Vagina (tissue), 2 donors: ENCODE measurements at regions of chr2 and their contacts with region 1.

Region 1: GRCh38 chr2:215454519-215455246 is 18.8 kb upstream of the FN1 start:
- DNase-seq: no peak
- H3K4me3 ChIP-seq: no peak overlapping the region
- H3K27ac ChIP-seq: no peak overlapping the region
- H3K4me1 ChIP-seq: no peaks in the 10 kb centered on the region
- H3K27me3 ChIP-seq: no peaks in the 10 kb centered on the region
- CTCF ChIP-seq: peak; percentile 44 to 77 (median 70)
- POLR2A ChIP-seq: no peak

Region 2: GRCh38 chr2:215693193-215693998 is 238.7 kb after region 1 on chr2:
- intact Hi-C with region 1: no loop called
- DNase-seq: no peak
- H3K4me3 ChIP-seq: no peak overlapping the region
- H3K27ac ChIP-seq: no peak overlapping the region
- H3K4me1 ChIP-seq: no peaks in the 10 kb centered on the region
- H3K27me3 ChIP-seq: no peaks in the 10 kb centered on the region
- CTCF ChIP-seq: no peak
- POLR2A ChIP-seq: no peak

Region 3: DNA sequence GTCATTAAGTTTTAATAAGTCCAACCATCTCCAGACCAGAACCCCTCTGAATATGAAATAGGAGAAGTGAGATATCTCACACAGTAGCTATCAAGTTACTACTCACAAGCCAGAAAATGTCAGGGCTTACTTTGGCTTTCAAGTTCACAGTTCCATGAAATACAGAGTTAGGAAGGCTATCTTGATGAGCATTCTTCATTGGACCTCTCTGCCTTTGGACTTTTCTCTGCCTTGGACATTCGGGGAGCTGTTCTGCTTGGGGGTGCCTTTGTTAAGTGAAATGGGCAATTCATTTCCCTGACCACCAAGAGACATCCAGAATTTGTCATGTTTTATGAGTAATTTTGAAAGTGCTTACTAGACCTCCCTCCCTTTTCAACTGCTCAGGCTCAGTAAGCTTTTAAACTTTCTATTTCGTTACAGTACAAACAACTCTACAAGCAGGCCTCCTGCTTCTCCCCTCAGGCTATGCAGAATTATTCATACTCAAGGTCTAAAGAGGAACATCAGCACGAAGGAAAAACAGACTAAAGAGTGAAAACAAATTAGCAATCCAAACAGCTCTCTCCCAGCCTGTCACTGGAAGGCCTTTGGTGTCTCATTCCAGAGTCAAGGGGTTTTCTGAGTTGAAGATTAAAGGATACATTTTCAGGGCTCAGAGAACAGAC is 463.4 kb after region 1 on chr2:
- intact Hi-C with region 1: loop called (anchors 10 kb)
- DNase-seq: no peak
- H3K4me3 ChIP-seq: no peak overlapping the region
- H3K27ac ChIP-seq: peak overlapping the region; percentile 44
- H3K4me1 ChIP-seq: no peaks in the 10 kb centered on the region
- H3K27me3 ChIP-seq: no peaks in the 10 kb centered on the region
- CTCF ChIP-seq: no peak
- POLR2A ChIP-seq: no peak

Region 4: DNA sequence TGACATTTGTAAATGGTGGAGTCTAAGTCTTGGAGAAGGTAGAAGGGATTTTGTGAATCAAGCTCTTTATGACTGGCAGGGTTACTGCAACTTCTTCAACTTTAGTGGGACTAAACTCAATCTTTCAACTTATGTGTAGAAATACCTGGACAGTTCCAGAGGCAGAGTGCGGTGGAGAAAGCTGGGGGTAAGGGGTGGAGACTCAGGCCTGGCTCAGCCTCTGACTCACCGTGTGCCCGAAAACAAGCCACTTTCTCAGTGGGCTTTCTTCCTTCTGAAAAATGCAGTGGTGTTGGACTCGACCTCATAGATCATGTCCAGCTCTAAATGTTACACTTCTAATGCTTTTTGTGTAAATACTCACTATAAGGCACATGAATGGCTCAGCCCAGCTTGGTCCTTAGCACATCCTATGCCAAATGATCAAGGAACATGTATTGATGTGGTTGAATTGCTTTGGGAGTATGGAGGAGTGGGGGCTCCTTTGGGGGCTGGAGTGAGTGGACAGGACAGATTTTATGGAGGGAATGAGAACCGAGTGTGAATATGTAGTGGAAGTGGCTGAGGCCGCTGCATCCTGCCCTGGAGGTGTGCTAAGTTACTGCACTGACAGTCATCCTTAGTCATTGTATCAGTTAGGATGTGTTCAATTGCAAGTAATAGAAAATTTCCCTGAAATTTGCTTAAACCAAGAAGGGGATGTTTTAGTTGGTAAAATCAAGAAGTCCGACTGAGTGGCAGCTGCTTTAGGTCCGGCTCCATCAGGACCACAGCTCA is 1272.9 kb after region 1 on chr2:
- intact Hi-C with region 1: no loop called
- DNase-seq: no peak
- H3K4me3 ChIP-seq: no peak overlapping the region
- H3K27ac ChIP-seq: no peak overlapping the region
- H3K4me1 ChIP-seq: peaks cover 6% of the 10 kb centered on the region
- H3K27me3 ChIP-seq: no peaks in the 10 kb centered on the region
- CTCF ChIP-seq: no peak
- POLR2A ChIP-seq: no peak